ENCODE measurements at regions of chr16 and their contacts with region 1.

Region 1: DNA sequence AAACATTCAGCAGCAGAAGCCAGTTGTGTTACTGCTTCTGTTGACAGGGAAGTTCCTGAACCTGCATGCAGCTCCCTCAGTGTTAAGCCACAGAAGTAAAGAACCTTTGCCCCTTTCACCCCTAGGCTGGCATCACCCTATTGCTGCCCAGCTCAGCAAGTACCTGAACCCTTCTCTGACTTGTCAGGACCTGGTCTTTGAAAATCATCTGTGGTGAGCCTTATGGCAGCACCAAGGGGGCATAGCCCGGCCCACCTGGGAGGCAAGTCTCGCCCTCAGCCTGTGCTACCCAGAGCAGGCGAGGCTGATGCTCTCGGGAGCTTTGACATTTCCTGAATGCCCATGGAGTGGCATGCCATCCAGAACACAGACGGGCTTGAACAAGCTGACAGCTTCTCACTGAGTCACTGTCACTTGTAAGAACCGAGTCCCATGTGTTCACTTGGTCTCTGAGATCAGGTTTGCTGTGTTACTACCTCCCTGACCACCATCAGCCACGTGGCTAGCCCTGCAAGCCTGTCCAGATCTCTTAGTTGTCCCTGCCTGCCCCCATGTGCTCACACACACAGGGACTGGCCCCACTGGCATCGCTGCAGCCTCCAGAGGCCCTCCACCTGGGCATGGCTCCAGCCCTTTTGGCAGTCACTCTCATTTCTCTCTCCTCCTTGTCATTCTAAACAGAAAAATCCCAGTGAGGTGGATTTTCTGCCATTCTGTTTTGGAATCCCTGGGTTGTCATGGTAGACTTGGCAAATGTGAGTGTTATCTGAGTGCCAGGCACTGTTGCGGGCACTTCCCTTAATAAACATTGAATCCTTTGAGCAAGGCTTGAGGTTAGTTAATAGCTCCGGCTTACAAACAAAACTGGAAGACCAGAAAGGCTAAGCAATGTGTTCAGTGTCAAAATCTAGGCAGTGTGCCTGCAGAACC is 2.9 kb upstream of the CARMIL2 start:
- DNase-seq: no peak
- ATAC-seq: no peak
- H3K4me3 ChIP-seq: no peak overlapping the region
- H3K4me3 Mint-ChIP-seq: no peak overlapping the region
- H3K27ac ChIP-seq: no peak overlapping the region
- H3K27ac Mint-ChIP-seq: peak overlapping the region in 1 of 2 donors; percentile 9
- H3K4me1 ChIP-seq: peaks cover 22% of the 10 kb centered on the region
- H3K4me1 Mint-ChIP-seq: no peaks in the 10 kb centered on the region
- H3K27me3 ChIP-seq: no peaks in the 10 kb centered on the region
- H3K27me3 Mint-ChIP-seq: no peaks in the 10 kb centered on the region
- CTCF ChIP-seq: no peak

Region 2: DNA sequence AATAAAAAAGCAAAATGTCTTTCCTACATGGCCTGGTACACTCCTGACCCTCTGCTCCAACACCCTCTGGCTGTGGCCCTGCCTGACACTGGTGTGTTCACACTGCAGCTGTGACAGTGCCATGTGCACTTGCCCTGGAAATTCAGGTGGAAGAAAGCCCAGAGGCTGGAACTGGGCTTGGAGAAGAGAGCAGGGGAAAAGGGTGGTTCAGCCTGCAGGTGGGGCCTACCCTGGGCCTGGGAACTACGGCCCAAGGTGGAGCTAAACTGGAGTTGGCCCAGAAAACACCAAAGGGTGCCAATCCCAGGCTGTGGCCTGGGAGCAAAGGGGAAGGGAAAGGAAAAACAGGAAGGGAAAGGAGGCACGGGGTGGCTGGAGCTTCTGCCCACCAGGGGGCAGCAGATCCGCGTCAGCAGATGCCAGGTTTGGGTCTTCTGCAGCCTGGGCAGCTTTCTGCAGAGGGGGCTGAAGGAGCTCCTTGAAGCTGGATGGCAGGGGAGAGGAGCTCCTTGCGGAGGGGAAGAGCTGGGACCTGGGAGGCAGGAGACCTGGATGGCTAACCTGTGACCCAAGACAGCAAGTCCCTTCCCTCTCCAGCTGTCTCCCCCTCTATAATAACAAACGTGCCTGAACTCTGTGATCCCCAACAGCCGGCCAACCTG is 95.2 kb before region 1 on chr16:
- intact Hi-C with region 1: loop called (anchors 1 kb)
- DNase-seq: peak; percentile 71 to 89
- ATAC-seq: peak; percentile 27 to 49 (median 46)
- H3K4me3 ChIP-seq: no peak overlapping the region
- H3K4me3 Mint-ChIP-seq: no peak overlapping the region
- H3K27ac ChIP-seq: peak overlapping the region; percentile 71
- H3K27ac Mint-ChIP-seq: peak overlapping the region; percentile 47 to 53
- H3K4me1 ChIP-seq: peaks cover 46% of the 10 kb centered on the region
- H3K4me1 Mint-ChIP-seq: peaks cover 8 to 41% of the 10 kb centered on the region in 2 donors
- H3K27me3 ChIP-seq: no peaks in the 10 kb centered on the region
- H3K27me3 Mint-ChIP-seq: no peaks in the 10 kb centered on the region
- CTCF ChIP-seq: peak; percentile 98

Measured in natural killer cell (primary cell).